ENCODE measurements at regions of chr14 and their contacts with region 1.

Region 1: GRCh38 chr14:51651388-51652167 is at the start of gene FRMD6:
- DNase-seq: peak; percentile 70
- H3K4me3 ChIP-seq: peak within 1 kb of the TSS; percentile 96
- H3K27ac ChIP-seq: peak within 1 kb of the TSS; percentile 97
- H3K27me3 ChIP-seq: no peaks in the 10 kb centered on the region
- CTCF ChIP-seq: peak; percentile 72
- polyA plus RNA-seq, gene FRMD6: 183 and 221 TPM in 2 replicates

Region 2: DNA sequence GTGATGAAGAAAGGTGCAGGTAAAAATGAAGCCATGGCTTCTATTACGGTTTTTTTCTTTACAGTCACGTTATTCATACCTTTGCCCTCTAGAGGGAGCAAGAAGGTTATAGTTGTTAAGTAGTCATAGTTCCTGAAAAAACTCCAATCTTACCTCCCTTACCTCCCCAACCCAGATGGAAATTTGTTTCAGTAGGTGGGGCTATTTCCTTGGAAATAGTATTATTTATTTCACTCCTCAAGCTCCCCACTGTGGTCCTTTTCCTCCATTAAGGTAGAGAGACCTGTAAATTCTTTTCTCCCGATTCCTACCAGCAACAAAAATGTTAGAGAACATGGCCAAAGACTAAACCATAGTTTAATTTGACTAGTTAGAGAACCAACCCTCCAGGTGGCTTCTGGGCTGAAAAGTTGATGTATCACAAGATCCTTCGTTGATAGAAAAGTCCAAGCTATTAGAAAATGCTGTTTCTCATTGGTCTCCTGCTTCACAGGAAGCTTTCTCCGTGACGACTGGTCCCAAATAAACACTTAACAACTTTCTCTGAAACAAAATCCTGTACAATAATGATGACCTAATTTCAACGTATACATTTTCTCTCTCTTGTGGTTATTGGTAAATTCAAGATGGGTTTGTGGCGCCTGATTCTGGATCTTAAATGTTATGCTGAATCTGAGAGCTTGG is 368.0 kb before region 1 on chr14:
- CTCF ChIA-PET with region 1: interaction called, 47 read pairs
- POLR2A ChIA-PET with region 1: interaction called, 6 read pairs
- DNase-seq: peak; percentile 83
- H3K4me3 ChIP-seq: no peak overlapping the region
- H3K27ac ChIP-seq: no peak overlapping the region
- H3K27me3 ChIP-seq: no peaks in the 10 kb centered on the region
- CTCF ChIP-seq: peak; percentile 79

Region 3: GRCh38 chr14:51547260-51547659 is 104.3 kb before region 1 on chr14:
- CTCF ChIA-PET with region 1: interaction called, 3 read pairs
- POLR2A ChIA-PET with region 1: interaction called, 13 read pairs
- DNase-seq: peak; percentile 99
- H3K4me3 ChIP-seq: no peak overlapping the region; the same call in 1 of the 2 replicates
- H3K27ac ChIP-seq: peak overlapping the region; percentile 86
- H3K27me3 ChIP-seq: no peaks in the 10 kb centered on the region
- CTCF ChIP-seq: no peak

Region 4: GRCh38 chr14:51597261-51598001 is 54.1 kb before region 1 on chr14:
- CTCF ChIA-PET with region 1: no interaction called
- POLR2A ChIA-PET with region 1: interaction called, 10 read pairs
- DNase-seq: no peak
- H3K4me3 ChIP-seq: no peak overlapping the region
- H3K27ac ChIP-seq: peak overlapping the region; percentile 43
- H3K27me3 ChIP-seq: no peaks in the 10 kb centered on the region
- CTCF ChIP-seq: no peak

Region 5: DNA sequence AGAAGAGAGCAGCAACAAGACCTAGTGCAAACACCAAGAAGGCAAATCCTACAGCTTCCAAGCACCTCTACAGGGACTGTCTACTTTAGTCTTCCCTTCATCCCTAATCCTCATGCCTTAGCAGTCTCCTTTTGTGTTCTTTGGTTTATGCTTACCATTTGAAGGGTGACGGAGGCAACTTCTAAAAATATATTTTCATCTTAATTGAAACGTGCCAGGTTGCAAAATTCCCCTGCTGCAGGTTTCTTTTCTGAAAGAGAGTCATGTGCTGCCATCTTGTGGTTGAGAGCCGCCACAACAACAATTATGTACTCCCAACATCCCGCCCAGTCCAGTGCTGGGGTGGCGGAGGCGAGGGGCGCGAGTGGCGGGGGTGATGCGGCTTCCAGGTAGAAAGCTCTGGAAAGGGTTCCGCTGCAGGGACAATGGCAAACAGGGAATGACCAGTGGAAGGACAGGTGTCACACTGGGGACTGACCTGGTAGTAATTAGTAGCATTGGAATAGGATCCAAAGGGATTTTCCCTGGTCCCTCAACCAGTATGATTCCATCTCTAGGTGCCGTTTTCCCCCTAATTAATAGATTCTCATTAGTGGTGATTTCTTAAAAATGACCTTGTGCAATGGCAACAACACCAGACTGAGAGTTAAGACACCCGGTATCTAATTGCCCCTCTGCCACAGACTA is 128.6 kb after region 1 on chr14:
- CTCF ChIA-PET with region 1: interaction called, 44 read pairs
- POLR2A ChIA-PET with region 1: interaction called, 3 read pairs
- DNase-seq: peak; percentile 24
- H3K4me3 ChIP-seq: peak overlapping the region; percentile 31; the same call in 1 of the 2 replicates
- H3K27ac ChIP-seq: no peak overlapping the region
- H3K27me3 ChIP-seq: no peaks in the 10 kb centered on the region
- CTCF ChIP-seq: peak; percentile 71

Region 6: DNA sequence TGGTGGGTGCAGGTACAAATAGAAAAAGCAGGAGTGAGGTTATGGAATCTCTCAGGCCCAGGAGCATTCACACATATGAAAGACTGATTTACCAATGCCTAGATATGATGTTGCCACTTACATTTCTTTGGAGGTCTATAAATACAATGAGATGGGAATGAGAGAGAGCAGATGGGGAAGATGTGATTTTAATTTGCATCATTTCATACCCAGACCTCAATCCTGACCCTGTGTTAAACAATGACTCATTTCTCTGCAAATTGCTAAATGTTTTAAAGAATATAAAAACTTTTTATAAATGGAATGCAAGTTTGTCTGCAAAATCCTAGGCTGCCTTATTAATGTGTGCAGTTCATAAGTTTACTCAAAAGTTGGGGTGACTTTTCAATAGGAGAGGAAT is 170.2 kb after region 1 on chr14:
- CTCF ChIA-PET with region 1: no interaction called
- POLR2A ChIA-PET with region 1: no interaction called
- DNase-seq: no peak
- H3K4me3 ChIP-seq: no peak overlapping the region
- H3K27ac ChIP-seq: no peak overlapping the region
- H3K27me3 ChIP-seq: peaks cover 5% of the 10 kb centered on the region
- CTCF ChIP-seq: no peak

Region 7: DNA sequence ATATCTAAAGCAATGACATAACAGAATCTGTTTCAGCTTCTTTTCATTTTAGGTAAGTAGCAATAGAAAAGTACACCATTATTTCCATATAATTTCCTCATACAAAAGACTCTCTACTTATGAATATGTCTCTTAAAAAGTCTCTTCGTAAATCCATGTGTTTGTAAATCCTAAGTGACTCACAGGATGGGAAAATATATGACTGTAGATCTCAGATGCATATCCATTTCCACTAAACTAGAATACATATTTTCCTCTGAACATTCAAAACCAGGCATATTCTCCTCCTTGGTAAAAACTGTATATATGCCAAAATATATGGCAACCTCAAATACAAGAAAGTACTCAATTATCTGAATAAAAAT is 807.1 kb after region 1 on chr14:
- CTCF ChIA-PET with region 1: no interaction called
- POLR2A ChIA-PET with region 1: no interaction called
- DNase-seq: no peak
- H3K4me3 ChIP-seq: no peak overlapping the region; the same call in 1 of the 2 replicates
- H3K27ac ChIP-seq: no peak overlapping the region
- H3K27me3 ChIP-seq: no peaks in the 10 kb centered on the region
- CTCF ChIP-seq: no peak

Measured in AG04450 (cell line).